T47D (cell line): ENCODE measurements at regions of chr2 and their contacts with region 1.

Region 1: GRCh38 chr2:42086500-42086953 is 38.7 kb downstream of the PKDCC start:
- DNase-seq: peak; percentile 41 to 68

Region 2: GRCh38 chr2:41869542-41870264 is 216.8 kb before region 1 on chr2:
- in situ Hi-C with region 1: loop called (anchors 25 kb)
- DNase-seq: peak; percentile 19 to 52